Activated CD4-positive, alpha-beta memory T cell treated with anti-CD3 and anti-CD28 coated beads, Interleukin-2, amount 10 ng/mL, durations not matched to agents 7 days and 5 days (primary cell): ENCODE measurements at regions of chr12 and their contacts with region 1.

Region 1: DNA sequence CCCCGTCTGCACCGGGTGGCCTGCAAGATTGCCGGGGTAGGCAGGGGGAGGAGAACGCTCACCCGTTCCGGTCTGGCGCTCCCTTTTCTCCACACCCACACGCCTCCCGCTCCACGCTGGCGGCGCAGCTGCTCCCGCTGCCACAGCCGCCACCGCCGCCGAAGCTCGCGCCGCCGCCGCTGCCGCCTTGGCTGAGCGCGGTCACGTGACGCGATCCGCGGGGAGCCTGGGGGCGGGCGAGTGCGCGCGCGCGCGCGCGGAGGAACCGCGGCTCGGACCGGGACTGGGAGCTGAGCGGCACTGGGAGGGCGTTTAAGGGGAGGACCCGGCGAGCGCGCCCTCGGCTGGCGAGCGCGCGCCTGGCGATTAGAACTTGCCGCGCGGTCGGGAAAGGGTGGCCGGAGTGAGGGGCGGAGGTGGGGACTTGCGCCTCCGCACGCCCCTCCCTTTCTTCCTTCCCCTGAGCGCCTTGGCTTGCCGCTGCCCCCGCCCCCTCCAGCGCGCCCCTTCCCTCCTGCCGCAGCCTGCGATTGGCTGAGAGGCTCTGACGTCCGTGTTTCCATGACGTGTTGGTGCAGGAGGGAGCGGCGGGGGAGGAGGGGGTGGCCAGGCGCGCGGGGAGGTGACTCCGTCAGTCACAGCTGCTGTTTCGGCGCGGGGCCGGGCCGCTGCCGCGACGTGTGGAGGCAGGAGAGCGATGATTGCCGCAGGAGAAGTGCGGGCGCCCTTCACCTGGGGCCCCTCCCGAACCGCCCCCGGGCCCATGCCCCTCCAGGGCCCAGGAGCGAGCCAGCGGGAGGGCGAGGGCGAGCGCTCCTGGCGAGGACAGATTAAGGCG is 738 bp upstream of the ATP2B1 start:
- DNase-seq: peak; percentile 99
- H3K4me3 Mint-ChIP-seq: peak overlapping the region; percentile 85
- H3K27ac Mint-ChIP-seq: peak overlapping the region; percentile 81
- H3K4me1 Mint-ChIP-seq: peaks cover 25% of the 10 kb centered on the region
- H3K27me3 Mint-ChIP-seq: peaks cover 6% of the 10 kb centered on the region

Region 2: GRCh38 chr12:89470741-89471509 is 238.5 kb before region 1 on chr12:
- CTCF ChIA-PET with region 1: interaction called, 5 read pairs
- POLR2A ChIA-PET with region 1: interaction called, 10 read pairs
- DNase-seq: no peak
- H3K4me3 Mint-ChIP-seq: no peak overlapping the region
- H3K27ac Mint-ChIP-seq: peak overlapping the region; percentile 84
- H3K4me1 Mint-ChIP-seq: peaks cover 81% of the 10 kb centered on the region
- H3K27me3 Mint-ChIP-seq: no peaks in the 10 kb centered on the region

Region 3: GRCh38 chr12:89542912-89543592 is 166.3 kb before region 1 on chr12:
- CTCF ChIA-PET with region 1: interaction called, 11 read pairs
- POLR2A ChIA-PET with region 1: interaction called, 6 read pairs
- DNase-seq: peak; percentile 66
- H3K4me3 Mint-ChIP-seq: no peak overlapping the region
- H3K27ac Mint-ChIP-seq: no peak overlapping the region
- H3K4me1 Mint-ChIP-seq: peaks cover 9% of the 10 kb centered on the region
- H3K27me3 Mint-ChIP-seq: no peaks in the 10 kb centered on the region

Region 4: GRCh38 chr12:89733579-89734201 is 24.3 kb after region 1 on chr12:
- CTCF ChIA-PET with region 1: interaction called, 3 read pairs
- POLR2A ChIA-PET with region 1: interaction called, 18 read pairs
- DNase-seq: no peak
- H3K4me3 Mint-ChIP-seq: no peak overlapping the region
- H3K27ac Mint-ChIP-seq: peak overlapping the region; percentile 21
- H3K4me1 Mint-ChIP-seq: peaks cover 9% of the 10 kb centered on the region
- H3K27me3 Mint-ChIP-seq: no peaks in the 10 kb centered on the region

Region 5: DNA sequence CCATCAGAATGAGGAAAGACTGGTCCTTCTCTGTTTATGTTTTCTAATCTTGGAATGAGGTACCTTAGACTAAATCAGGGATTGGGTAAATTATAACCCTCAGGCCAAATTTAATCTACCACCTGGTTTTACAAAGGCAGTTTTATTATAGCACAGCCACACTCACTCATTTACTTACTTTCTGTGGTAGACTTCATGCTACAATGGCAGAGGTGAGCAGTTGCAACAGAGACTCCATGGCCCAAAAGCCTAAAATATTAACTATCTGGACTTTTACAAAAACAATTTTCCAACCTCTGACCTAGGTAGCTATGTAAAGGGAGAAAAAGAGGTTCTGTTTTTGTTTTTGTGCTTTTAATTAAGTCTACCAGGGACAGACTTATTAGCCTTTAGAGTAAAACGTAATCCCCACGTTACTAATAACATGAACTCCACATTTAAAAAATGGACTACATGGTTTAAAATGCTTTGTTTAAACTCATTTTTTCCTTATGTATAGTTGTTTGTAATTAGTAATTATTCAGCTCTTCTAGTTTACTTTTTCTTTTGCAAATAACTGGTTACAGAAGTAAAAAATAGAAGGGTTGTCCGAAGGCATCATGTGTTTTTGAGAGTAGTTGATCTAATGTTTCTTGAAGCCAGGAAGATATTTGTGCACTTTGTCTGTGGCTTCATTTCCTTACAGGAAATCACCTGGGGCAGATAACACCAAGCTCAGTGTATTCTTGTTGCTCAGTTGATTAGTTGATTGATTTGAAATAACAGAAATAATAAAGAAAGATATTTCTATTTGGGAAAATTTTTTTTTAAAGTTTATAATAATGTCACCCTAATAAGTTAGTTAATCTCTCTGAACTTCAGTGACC is 56.8 kb after region 1 on chr12:
- CTCF ChIA-PET with region 1: no interaction called
- POLR2A ChIA-PET with region 1: interaction called, 18 read pairs
- DNase-seq: no peak
- H3K4me3 Mint-ChIP-seq: no peak overlapping the region
- H3K27ac Mint-ChIP-seq: peak overlapping the region; percentile 42
- H3K4me1 Mint-ChIP-seq: peaks cover 16% of the 10 kb centered on the region
- H3K27me3 Mint-ChIP-seq: no peaks in the 10 kb centered on the region

Region 6: DNA sequence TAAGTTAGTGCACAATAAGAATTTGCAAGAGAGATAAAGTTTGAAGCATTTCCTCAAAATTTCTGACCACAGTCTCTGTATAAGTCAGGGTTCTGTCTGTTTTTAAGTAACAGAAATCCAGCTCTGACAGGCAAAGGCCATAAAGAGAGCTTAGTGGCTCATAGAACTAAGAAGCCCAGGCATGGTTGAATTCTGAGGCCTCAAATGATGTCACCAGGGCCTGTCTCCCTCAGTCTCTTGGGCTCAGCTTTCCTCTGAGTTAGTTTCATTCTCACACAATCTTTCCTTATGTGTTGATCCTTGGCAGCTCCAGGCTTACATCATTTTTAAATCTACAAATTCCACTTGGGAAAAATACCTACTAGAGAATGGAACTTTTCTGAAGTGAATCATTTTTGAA is 172.7 kb after region 1 on chr12:
- CTCF ChIA-PET with region 1: no interaction called
- POLR2A ChIA-PET with region 1: interaction called, 13 read pairs
- DNase-seq: no peak
- H3K4me3 Mint-ChIP-seq: no peak overlapping the region
- H3K27ac Mint-ChIP-seq: peak overlapping the region; percentile 88
- H3K4me1 Mint-ChIP-seq: peaks cover 37% of the 10 kb centered on the region
- H3K27me3 Mint-ChIP-seq: no peaks in the 10 kb centered on the region

Region 7: GRCh38 chr12:90129366-90130030 is 420.1 kb after region 1 on chr12:
- CTCF ChIA-PET with region 1: no interaction called
- POLR2A ChIA-PET with region 1: no interaction called
- DNase-seq: no peak
- H3K4me3 Mint-ChIP-seq: no peak overlapping the region
- H3K27ac Mint-ChIP-seq: no peak overlapping the region
- H3K4me1 Mint-ChIP-seq: no peaks in the 10 kb centered on the region
- H3K27me3 Mint-ChIP-seq: no peaks in the 10 kb centered on the region